ENCODE measurements at regions of chr3 and their contacts with region 1.

Region 1: GRCh38 chr3:52973806-52974205 is 72.1 kb downstream of the SFMBT1 start:
- DNase-seq: no peak
- ATAC-seq: no peak
- H3K4me3 ChIP-seq: no peak overlapping the region
- H3K4me3 Mint-ChIP-seq: no peak overlapping the region
- H3K27ac ChIP-seq: no peak overlapping the region
- H3K27ac Mint-ChIP-seq: peak overlapping the region; percentile 1
- H3K4me1 ChIP-seq: no peaks in the 10 kb centered on the region
- H3K4me1 Mint-ChIP-seq: peaks cover 23% of the 10 kb centered on the region
- H3K27me3 ChIP-seq: no peaks in the 10 kb centered on the region
- H3K27me3 Mint-ChIP-seq: no peaks in the 10 kb centered on the region
- CTCF ChIP-seq: no peak

Region 2: DNA sequence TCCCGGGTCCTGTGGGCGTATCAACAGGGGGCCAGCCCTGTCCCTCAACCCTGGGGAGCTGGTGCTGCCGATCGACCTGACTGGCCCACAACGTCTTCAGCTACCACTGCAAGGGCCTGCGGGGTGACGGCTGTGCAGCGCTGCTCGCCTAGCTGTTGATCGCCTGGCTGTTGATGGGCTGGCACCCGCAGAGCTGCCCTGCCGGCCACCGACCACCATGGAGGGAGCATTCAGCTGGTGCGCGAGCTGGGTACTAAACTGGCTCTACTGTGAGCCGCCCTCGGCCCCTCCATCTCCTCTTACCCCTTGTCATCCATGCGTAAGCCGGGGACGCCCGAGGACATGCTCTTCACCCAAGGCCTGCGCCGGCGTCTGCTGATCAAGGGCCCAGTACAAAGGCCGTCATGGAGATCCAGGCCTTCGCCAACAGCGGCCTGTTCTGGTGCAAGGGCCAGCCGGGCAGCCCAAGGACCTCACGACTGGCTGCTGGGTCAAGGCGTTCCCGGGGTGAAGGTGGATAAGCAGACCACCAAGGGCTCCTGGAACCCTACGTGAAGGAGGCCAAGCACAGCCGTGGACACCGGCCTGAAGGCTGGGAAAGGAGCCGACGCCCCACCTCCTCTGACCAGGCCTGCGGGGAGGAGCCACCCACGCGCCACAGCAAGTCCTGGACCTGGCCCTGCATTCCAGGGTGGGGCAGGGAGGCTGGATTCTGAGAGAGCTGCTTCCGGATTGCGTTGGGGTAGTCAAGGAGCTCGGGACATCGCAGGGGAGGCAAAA is 25.1 kb after region 1 on chr3:
- CTCF ChIA-PET with region 1: no interaction called
- POLR2A ChIA-PET with region 1: interaction called, 10 read pairs
- intact Hi-C with region 1: no loop called
- DNase-seq: no peak
- ATAC-seq: no peak
- H3K4me3 ChIP-seq: no peak overlapping the region
- H3K4me3 Mint-ChIP-seq: no peak overlapping the region
- H3K27ac ChIP-seq: no peak overlapping the region
- H3K27ac Mint-ChIP-seq: no peak overlapping the region
- H3K4me1 ChIP-seq: no peaks in the 10 kb centered on the region
- H3K4me1 Mint-ChIP-seq: peaks cover 3% of the 10 kb centered on the region
- H3K27me3 ChIP-seq: no peaks in the 10 kb centered on the region
- H3K27me3 Mint-ChIP-seq: no peaks in the 10 kb centered on the region
- CTCF ChIP-seq: no peak